Posterior vena cava (tissue), 2 donors: ENCODE measurements at regions of chr16 and their contacts with region 1.

Region 1: GRCh38 chr16:52416888-52417287 is 130.1 kb downstream of the TOX3 start:
- DNase-seq: no peak

Region 2: DNA sequence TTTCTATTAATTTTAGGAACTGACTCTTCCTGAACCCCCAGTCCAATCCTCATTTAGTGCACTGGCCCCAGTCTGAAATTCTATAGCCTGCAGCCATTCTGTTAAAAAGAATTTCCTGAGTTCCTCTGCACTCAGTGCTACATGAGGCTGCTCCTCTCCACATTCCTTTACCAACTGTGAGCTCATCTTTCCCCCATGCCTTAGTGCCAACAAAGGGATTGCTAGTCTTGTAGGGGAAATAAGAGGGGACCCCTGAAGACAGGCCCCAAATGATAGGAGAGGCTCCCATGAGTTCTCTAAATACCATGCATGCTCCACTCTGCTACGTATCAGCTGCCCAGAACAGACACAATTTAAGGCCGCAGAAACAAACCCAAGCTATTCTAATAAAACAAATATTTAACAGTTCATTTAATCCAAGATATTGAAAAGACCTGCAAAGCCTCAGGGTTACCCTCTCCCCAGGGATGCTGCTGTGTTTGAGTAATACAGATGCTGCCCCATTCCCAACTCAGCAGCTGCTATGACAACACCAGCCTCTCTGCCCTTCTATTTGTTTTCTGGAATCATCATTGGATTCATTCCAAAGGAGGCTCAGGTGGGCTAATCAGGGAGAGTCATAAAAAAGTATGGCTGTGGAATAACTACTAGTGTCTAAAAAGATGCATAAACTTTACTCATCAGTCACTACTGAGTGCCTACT is 98.4 kb before region 1 on chr16:
- intact Hi-C with region 1: no loop called
- DNase-seq: no peak

Region 3: GRCh38 chr16:52379551-52379950 is 37.3 kb before region 1 on chr16:
- intact Hi-C with region 1: loop called in 1 of 2 experiments (anchors 2 kb)
- DNase-seq: no peak

Region 4: GRCh38 chr16:52976539-52977167 is 559.8 kb after region 1 on chr16:
- intact Hi-C with region 1: no loop called
- DNase-seq: no peak